ENCODE measurements at regions of chr2 and their contacts with region 1.

Region 1: GRCh38 chr2:41835401-41835800 is 212.4 kb upstream of the PKDCC start:
- DNase-seq: no peak
- H3K4me3 Mint-ChIP-seq: no peak overlapping the region
- H3K27ac Mint-ChIP-seq: no peak overlapping the region
- H3K4me1 Mint-ChIP-seq: no peaks in the 10 kb centered on the region
- H3K27me3 Mint-ChIP-seq: peaks cover 17% of the 10 kb centered on the region

Region 2: DNA sequence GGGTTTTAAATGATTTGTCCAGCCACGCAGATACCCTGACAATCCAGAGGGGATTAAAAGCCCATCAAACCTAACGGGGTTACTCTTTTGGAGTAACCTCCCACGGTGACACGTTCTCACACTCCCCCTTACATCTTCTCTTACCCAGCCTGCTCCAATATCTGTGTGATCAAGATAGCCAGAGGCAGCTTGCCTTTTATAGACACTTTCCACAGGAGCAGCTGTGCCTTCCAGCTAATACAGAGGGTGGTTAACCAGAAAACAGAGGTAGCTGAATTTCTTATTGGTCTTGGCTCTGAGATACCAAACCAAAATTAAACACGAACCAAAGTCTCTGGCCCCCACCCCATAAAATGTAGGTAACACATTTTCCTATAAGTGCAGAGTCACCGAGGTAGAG is 20.4 kb before region 1 on chr2:
- intact Hi-C with region 1: loop called (anchors 1 kb)
- DNase-seq: no peak
- H3K4me3 Mint-ChIP-seq: no peak overlapping the region
- H3K27ac Mint-ChIP-seq: no peak overlapping the region
- H3K4me1 Mint-ChIP-seq: no peaks in the 10 kb centered on the region
- H3K27me3 Mint-ChIP-seq: peaks cover 3% of the 10 kb centered on the region